Cardiac septum (tissue), 1 donor: ENCODE measurements at regions of chr1 and their contacts with region 1.

Region 1: DNA sequence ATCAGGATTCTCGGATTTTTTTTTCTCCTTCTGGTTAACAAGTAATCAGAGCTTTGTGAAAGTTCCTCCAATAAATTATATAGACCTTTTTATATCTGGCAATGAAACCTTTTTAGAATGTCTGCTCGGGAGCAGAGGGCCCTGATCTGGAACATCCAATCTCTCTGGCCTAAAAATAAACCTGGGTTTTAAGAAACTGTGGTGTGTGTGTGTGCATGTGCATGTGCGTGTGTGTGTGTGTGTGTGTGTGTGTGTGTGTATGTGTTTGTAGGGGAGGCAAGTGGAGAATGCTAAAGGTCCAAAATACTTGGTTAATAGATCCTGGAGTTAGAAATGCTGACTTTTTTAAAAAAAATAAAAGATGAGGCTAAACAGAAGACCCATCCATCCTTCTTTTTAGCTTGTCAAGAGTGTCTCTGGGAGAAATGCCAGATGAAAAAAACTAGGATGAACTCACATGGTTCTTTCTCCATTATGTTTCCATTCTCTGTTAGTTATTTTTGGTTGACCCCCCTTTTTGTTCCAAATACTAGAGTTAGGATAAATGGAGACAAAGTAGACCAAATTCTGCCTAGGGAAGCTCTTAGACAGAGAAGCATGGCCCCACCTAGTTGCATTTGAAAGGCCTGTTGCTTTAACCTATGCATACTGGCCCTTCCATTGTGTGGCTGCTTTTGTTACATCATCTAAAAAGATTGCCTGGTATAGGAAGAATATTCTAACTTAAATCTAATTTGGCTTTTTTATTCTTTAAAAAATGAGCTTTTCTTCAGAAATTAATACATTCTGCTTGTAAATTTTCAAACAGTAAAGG is 175.9 kb downstream of the PAPPA2 start:
- DNase-seq: no peak

Region 2: DNA sequence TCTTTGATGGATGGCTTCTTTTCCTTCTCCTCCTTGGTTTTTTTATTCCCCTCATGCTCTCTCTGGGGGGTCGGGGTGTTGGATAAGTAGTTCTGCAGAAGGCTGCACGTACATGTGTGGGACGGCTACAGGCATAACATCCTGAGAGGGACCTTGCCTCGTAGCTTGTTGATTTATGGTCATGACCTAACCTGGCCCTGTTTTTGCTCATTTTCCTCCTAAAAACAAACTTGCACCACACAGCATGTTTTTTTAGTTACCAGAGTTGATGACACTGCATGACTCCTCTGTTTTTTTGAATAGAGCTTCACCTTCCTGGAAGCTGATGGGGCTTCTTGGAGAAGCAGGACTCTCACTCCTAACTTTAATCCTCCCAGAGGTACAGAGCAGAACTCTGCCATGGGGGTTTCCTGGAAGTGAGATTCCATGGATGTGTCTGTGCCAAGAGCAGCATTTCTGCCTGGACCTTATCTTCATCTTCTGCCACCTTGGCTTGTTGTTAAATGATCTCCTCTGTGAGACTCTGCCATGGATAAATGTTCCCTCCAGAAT is 61.2 kb before region 1 on chr1:
- intact Hi-C with region 1: loop called (anchors 5 kb)
- DNase-seq: no peak